ENCODE measurements at regions of chr9 and their contacts with region 1.

Region 1: DNA sequence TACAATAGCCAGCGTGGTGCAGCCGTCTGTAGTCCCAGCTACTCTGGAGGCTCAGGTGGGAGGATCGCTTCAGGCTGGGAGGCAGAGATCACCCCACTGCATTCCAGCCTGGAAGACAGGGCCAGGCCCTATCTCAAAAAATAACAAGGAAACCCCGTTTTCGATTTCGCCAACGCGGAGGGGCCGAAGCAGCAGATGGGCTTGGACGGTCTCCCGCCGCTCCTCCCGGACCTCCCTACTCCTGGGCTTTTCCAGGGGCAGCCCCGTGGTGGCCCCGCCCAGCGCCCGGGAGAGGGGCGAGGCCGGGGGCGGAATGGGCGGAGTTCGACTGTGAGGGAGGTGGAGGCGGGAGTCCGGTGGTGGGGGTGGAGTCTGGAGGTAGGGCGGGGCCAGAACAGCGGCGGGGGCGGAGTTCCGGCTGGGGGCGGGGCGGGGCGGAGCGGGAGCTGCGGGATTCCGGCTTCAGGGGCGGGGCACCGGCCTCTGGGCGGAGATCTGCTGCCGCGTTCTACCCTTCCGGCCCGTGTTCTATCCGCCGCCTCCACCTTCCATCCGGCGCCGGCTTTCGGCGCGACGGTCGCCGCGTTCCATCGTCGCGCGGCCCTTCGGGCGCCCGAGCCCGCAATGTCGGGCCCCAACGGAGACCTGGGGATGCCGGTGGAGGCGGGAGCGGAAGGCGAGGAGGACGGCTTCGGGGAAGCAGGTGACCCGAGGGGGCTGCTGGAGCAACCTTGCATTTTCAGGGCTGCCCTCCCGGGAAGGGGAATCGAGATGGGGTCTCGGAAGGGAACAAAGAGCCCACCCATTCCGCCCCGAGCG is at the start of gene BBLN:
- DNase-seq: peak; percentile 86 to 94 (median 89)
- H3K4me3 ChIP-seq: peak within 1 kb of the TSS; percentile 98
- H3K4me3 Mint-ChIP-seq: peak within 1 kb of the TSS; percentile 78 to 93 (median 85)
- H3K27ac ChIP-seq: peak within 1 kb of the TSS; percentile 91
- H3K27ac Mint-ChIP-seq: peak within 1 kb of the TSS; percentile 81 to 98 (median 95)
- H3K4me1 ChIP-seq: peaks cover 21% of the 10 kb centered on the region
- H3K4me1 Mint-ChIP-seq: peaks cover 15 to 28% (median 24%) of the 10 kb centered on the region in 3 donors
- H3K27me3 ChIP-seq: no peaks in the 10 kb centered on the region
- H3K27me3 Mint-ChIP-seq: peaks cover 0 to 3% of the 10 kb centered on the region in 2 donors
- total RNA-seq, gene BBLN: 75.5 to 78.4 TPM

Region 2: DNA sequence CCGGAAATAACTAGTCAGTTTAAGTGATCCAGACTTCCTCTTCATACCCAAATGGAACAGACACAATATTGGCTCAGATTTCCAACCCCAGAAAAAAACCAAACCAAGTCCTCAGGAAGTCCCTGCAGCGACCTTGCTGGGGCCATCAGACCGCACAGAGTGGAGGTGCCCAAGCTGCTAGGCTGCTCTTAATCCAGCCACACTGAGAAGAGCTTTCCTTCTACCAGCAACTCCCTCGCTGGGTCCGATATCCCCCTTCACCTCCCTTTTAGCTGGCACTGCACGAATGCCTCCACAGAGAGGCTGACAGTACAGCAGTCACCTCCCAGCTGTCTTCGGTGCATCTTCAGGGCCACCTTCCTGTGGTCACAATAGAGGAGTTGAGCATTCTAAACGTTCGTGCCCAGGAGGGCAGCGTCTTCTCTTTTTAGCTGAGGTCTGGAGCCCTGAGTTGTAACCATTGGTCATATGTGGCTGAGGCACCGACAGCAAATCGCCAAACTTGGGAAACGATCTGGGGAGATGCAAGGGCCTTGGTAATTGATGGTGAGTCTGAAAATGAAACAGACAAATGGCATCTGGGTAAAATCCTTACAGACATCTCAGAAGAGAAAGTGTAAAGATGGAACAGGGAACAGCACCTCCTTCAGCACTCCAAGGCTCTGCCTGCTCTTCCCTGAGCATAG is 98.6 kb before region 1 on chr9:
- CTCF ChIA-PET with region 1: no interaction called
- POLR2A ChIA-PET with region 1: no interaction called
- DNase-seq: no peak
- H3K4me3 ChIP-seq: peak overlapping the region; percentile 38
- H3K4me3 Mint-ChIP-seq: peak overlapping the region; percentile 3 to 76 (median 70)
- H3K27ac ChIP-seq: no peak overlapping the region
- H3K27ac Mint-ChIP-seq: peak overlapping the region; percentile 56 to 88 (median 82)
- H3K4me1 ChIP-seq: peaks cover 51% of the 10 kb centered on the region
- H3K4me1 Mint-ChIP-seq: peaks cover 33 to 51% (median 37%) of the 10 kb centered on the region in 3 donors
- H3K27me3 ChIP-seq: no peaks in the 10 kb centered on the region
- H3K27me3 Mint-ChIP-seq: no peaks in the 10 kb centered on the region

Region 3: DNA sequence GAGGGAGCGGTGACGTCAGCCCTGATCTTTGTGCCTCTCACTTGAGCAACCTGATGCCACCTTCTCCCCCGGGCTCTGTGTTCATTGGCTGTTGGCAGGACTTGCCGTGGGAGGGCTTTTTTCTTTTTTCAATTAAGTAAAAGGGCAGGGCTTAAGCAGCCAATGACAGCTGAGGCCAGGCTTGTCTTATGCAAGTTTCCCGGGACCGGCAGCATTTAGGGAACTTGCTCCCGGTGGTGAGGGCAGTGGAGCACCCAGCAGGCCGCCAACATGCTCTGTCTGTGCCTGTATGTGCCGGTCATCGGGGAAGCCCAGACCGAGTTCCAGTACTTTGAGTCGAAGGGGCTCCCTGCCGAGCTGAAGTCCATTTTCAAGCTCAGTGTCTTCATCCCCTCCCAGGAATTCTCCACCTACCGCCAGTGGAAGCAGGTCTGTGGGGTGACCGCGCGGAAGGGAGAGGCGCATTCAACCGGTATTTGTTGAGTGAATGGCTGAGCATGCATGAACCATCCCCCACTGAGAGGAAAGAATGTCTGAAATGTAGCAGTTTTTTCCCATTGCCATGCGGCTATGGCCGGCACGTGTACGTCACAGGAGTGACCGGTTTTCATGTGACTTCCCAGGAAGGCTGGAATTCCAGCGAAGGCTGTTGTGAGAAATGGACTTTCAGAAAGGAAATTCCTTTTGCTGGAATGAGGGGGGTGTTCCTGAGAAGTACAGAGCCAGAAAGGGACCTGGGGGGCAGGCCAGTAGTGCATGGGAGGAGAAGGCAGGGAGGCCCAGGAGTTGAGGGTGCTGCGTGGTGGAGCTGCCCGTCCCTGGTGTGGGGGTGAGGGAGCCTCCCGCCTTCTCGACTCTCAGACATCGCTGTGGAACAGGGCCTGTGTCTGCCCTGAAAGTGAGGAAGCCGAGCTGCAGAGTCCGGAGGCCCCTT is 61.4 kb before region 1 on chr9:
- CTCF ChIA-PET with region 1: no interaction called
- POLR2A ChIA-PET with region 1: no interaction called
- DNase-seq: peak in 2 of 5 donors; percentile 14 to 66
- H3K4me3 ChIP-seq: no peak overlapping the region
- H3K4me3 Mint-ChIP-seq: no peak overlapping the region
- H3K27ac ChIP-seq: peak overlapping the region; percentile 54
- H3K27ac Mint-ChIP-seq: peak overlapping the region in 6 of 8 donors; percentile 47 to 74 (median 60)
- H3K4me1 ChIP-seq: peaks cover 68% of the 10 kb centered on the region
- H3K4me1 Mint-ChIP-seq: peaks cover 46 to 83% (median 54%) of the 10 kb centered on the region in 3 donors
- H3K27me3 ChIP-seq: no peaks in the 10 kb centered on the region
- H3K27me3 Mint-ChIP-seq: peaks cover 0 to 2% of the 10 kb centered on the region in 2 donors

Region 4: DNA sequence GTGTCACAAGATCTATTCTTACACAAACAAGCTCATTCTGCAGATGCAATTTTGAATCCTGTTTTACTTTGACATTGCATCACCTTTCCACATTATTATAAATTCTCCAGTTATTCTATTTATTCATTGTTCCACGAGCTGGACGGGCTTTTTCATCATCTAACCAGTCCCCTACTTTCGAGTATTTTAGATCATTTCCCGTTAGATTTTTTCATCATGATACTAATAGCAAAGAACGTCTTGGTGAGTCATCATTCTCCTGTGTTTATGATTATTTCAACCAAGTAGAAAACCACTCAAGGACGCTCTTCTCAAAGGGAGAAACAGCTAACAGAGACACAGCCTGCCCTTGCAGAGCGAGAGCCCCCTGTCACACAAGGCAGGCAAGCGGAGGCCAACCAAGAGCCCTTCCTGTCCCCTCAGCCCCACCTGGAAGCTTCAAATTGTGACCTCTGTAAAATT is 15.1 kb after region 1 on chr9:
- CTCF ChIA-PET with region 1: no interaction called
- POLR2A ChIA-PET with region 1: no interaction called
- DNase-seq: no peak
- H3K4me3 ChIP-seq: no peak overlapping the region
- H3K4me3 Mint-ChIP-seq: no peak overlapping the region
- H3K27ac ChIP-seq: no peak overlapping the region
- H3K27ac Mint-ChIP-seq: no peak overlapping the region
- H3K4me1 ChIP-seq: no peaks in the 10 kb centered on the region
- H3K4me1 Mint-ChIP-seq: no peaks in the 10 kb centered on the region
- H3K27me3 ChIP-seq: no peaks in the 10 kb centered on the region
- H3K27me3 Mint-ChIP-seq: no peaks in the 10 kb centered on the region

Region 5: DNA sequence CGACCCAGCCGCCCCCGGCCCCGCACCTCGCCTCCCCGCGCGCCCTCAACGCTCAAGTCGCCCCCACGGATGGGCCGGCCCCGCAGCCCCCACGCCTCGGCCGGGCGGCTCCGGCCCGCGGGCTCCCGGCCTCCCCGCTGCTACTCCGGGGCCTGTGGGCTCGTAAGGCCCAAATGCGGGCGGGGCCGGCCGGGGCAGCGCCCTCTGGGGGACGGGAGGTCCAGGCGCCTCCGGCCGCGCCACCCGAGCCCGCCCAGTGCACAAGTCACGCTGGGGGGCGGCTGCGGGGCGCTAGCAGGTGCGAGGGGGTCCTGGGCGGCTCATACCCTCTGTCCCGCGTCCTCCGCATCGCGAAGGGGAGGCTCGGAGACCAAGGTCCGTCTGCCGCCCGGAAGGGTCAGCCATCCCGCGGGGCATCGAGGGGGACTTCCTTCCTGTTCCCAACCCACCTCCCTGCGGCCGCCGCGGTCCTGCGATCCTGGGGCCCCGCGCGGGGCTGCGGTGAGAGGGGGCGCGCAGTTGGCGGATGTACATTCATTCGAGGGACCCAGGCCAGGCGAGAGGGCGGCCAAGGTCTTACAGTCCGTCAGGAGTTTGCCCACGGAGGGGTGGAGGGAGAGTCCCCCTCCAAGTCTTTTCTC is 31.5 kb after region 1 on chr9 and contains the start of gene CIZ1:
- CTCF ChIA-PET with region 1: interaction called, 3 read pairs
- POLR2A ChIA-PET with region 1: interaction called, 13 read pairs
- DNase-seq: peak; percentile 64 to 78 (median 70)
- H3K4me3 ChIP-seq: peak within 1 kb of the TSS; percentile 80
- H3K4me3 Mint-ChIP-seq: peak within 1 kb of the TSS; percentile 87 to 97 (median 96)
- H3K27ac ChIP-seq: peak within 1 kb of the TSS; percentile 80
- H3K27ac Mint-ChIP-seq: peak within 1 kb of the TSS; percentile 78 to 97 (median 93)
- H3K4me1 ChIP-seq: peaks cover 13% of the 10 kb centered on the region
- H3K4me1 Mint-ChIP-seq: peaks cover 20 to 46% (median 24%) of the 10 kb centered on the region in 3 donors
- H3K27me3 ChIP-seq: no peaks in the 10 kb centered on the region
- H3K27me3 Mint-ChIP-seq: peaks cover 0 to 5% of the 10 kb centered on the region in 2 donors
- total RNA-seq, gene CIZ1: 114 to 125 TPM

Region 6: GRCh38 chr9:128201441-128202369 is 41.7 kb after region 1 on chr9:
- CTCF ChIA-PET with region 1: no interaction called
- POLR2A ChIA-PET with region 1: no interaction called
- DNase-seq: no peak
- H3K4me3 ChIP-seq: no peak overlapping the region
- H3K4me3 Mint-ChIP-seq: peak overlapping the region in 3 of 7 donors; percentile 16 to 86 (median 28)
- H3K27ac ChIP-seq: no peak overlapping the region
- H3K27ac Mint-ChIP-seq: no peak overlapping the region
- H3K4me1 ChIP-seq: peaks cover 14% of the 10 kb centered on the region
- H3K4me1 Mint-ChIP-seq: peaks cover 8 to 10% (median 9%) of the 10 kb centered on the region in 3 donors
- H3K27me3 ChIP-seq: peaks cover 13% of the 10 kb centered on the region
- H3K27me3 Mint-ChIP-seq: peaks cover 3 to 16% of the 10 kb centered on the region in 2 donors